ENCODE measurements at regions of chr9 and their contacts with region 1.

Region 1: GRCh38 chr9:90914868-90915483 is 113.4 kb downstream of the SYK start:
- DNase-seq: peak; percentile 72 to 76 (median 75)
- ATAC-seq: peak; percentile 98
- H3K4me3 ChIP-seq: no peak overlapping the region
- H3K27ac ChIP-seq: no peak overlapping the region
- H3K4me1 ChIP-seq: no peaks in the 10 kb centered on the region
- H3K27me3 ChIP-seq: peaks cover 0 to 22% of the 10 kb centered on the region in 2 experiments; a peak in 2 of 5 replicates
- CTCF ChIP-seq: peak; percentile 78 to 84 (median 80)
- EP300 ChIP-seq: no peak
- POLR2A ChIP-seq: no peak
- RAD21 ChIP-seq: peak; percentile 78 to 88

Region 2: GRCh38 chr9:90741036-90741435 is 173.9 kb before region 1 on chr9:
- CTCF ChIA-PET with region 1: no interaction called
- POLR2A ChIA-PET with region 1: no interaction called
- in situ Hi-C with region 1: no loop called
- intact Hi-C with region 1: no loop called
- DNase-seq: no peak
- ATAC-seq: no peak
- H3K4me3 ChIP-seq: no peak overlapping the region
- H3K27ac ChIP-seq: no peak overlapping the region
- H3K4me1 ChIP-seq: no peaks in the 10 kb centered on the region
- H3K27me3 ChIP-seq: no peaks in the 10 kb centered on the region
- CTCF ChIP-seq: no peak
- EP300 ChIP-seq: no peak
- POLR2A ChIP-seq: no peak
- RAD21 ChIP-seq: no peak

Region 3: DNA sequence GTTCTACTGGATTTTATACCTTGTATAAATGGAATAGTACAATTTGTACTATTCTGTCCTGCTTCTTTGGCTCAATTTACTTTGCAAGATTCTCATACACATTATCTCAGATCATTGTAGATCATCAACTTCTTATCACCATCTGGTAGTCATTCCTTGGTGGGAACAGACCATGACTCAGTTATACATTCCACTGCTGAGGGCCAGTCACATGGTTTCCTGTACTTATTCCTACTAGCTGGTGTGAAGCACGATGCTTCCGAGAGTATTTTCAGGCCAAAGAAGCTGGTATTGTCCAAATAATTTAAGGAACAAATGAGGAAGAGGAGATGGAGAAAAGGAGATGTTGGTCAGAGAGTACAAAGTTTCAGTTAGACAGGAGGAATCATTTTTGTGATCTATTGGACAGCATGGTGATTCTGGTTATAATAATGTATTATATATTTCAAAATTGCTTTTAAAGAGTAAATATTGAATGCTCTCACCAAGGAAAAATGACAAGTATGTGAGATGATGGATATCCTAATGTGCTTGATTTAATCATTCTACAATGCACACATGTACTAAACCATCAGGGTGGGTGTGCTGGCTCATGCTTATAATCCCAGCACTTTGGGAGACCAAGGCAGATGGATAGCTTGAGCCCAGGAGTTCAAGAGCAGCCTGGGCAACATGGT is 10.7 kb after region 1 on chr9:
- CTCF ChIA-PET with region 1: no interaction called
- POLR2A ChIA-PET with region 1: no interaction called
- in situ Hi-C with region 1: no loop called
- intact Hi-C with region 1: no loop called
- DNase-seq: no peak
- ATAC-seq: no peak
- H3K4me3 ChIP-seq: no peak overlapping the region
- H3K27ac ChIP-seq: no peak overlapping the region
- H3K4me1 ChIP-seq: no peaks in the 10 kb centered on the region
- H3K27me3 ChIP-seq: peaks cover 0 to 28% of the 10 kb centered on the region in 2 experiments; a peak in 2 of 5 replicates
- CTCF ChIP-seq: no peak
- EP300 ChIP-seq: no peak
- POLR2A ChIP-seq: no peak
- RAD21 ChIP-seq: no peak

Region 4: GRCh38 chr9:91676046-91676445 is 761.1 kb after region 1 on chr9:
- CTCF ChIA-PET with region 1: no interaction called
- POLR2A ChIA-PET with region 1: no interaction called
- in situ Hi-C with region 1: no loop called
- intact Hi-C with region 1: loop called (anchors 5 kb)
- DNase-seq: peak in 1 of 4 experiments; percentile 25
- ATAC-seq: peak; percentile 65; the same call in 2 of the 3 replicates
- H3K4me3 ChIP-seq: no peak overlapping the region
- H3K27ac ChIP-seq: no peak overlapping the region
- H3K4me1 ChIP-seq: no peaks in the 10 kb centered on the region
- H3K27me3 ChIP-seq: peaks cover 0 to 6% of the 10 kb centered on the region in 2 experiments; a peak in 1 of 5 replicates
- CTCF ChIP-seq: peak; percentile 34 to 48 (median 46); a peak in 4 of 6 replicates
- EP300 ChIP-seq: no peak
- POLR2A ChIP-seq: no peak
- RAD21 ChIP-seq: peak; percentile 14 to 47; a peak in 2 of 4 replicates

Region 5: GRCh38 chr9:91727316-91727861 is 812.4 kb after region 1 on chr9:
- CTCF ChIA-PET with region 1: no interaction called
- POLR2A ChIA-PET with region 1: no interaction called
- in situ Hi-C with region 1: loop called (anchors 10 kb)
- intact Hi-C with region 1: no loop called
- DNase-seq: peak; percentile 69 to 79 (median 74)
- ATAC-seq: peak; percentile 100
- H3K4me3 ChIP-seq: no peak overlapping the region
- H3K27ac ChIP-seq: peak overlapping the region; percentile 41; the same call in 1 of the 3 replicates
- H3K4me1 ChIP-seq: peaks cover 6 to 8% of the 10 kb centered on the region in 2 experiments; a peak in 4 of 5 replicates
- H3K27me3 ChIP-seq: no peaks in the 10 kb centered on the region
- CTCF ChIP-seq: peak; percentile 64 to 82 (median 75)
- EP300 ChIP-seq: no peak
- POLR2A ChIP-seq: no peak
- RAD21 ChIP-seq: peak; percentile 61 to 64

Measured in K562 (cell line).